ENCODE measurements at regions of chr6 and their contacts with region 1.

Region 1: GRCh38 chr6:145814501-145815308 is at the start of gene FBXO30:
- DNase-seq: peak; percentile 95
- H3K4me3 ChIP-seq: peak within 1 kb of the TSS; percentile 56 to 95 (median 90)
- H3K27ac ChIP-seq: peak within 1 kb of the TSS; percentile 83
- H3K4me1 ChIP-seq: peaks cover 28% of the 10 kb centered on the region
- H3K27me3 ChIP-seq: no peaks in the 10 kb centered on the region
- CTCF ChIP-seq: no peak
- POLR2A ChIP-seq: peak; percentile 71
- total RNA-seq, gene FBXO30: 10.4 and 11.1 TPM in 2 replicates

Region 2: DNA sequence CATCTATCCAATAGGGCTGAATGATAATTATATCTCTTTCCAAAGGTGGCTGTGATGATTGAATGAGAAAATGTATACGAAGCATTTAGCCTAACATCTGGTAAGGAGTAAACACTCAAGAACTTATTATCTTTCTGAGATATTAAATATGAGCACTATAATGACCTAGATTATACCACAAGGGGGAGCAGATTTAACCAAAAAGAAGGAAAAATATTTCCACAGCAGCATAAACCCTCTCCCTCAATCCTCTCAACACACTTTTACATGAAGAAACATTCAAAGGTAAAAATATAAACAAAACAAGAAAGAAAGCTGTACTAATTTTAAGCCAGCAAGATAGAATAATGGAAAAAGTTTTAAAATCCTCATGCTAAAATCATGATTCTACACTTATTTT is 81.1 kb after region 1 on chr6:
- CTCF ChIA-PET with region 1: interaction called, 4 read pairs
- POLR2A ChIA-PET with region 1: no interaction called
- dilution Hi-C with region 1: no loop called
- intact Hi-C with region 1: loop called (anchors 2 kb)
- DNase-seq: peak; percentile 35
- H3K4me3 ChIP-seq: no peak overlapping the region
- H3K27ac ChIP-seq: no peak overlapping the region
- H3K4me1 ChIP-seq: peaks cover 9% of the 10 kb centered on the region
- H3K27me3 ChIP-seq: no peaks in the 10 kb centered on the region
- CTCF ChIP-seq: peak; percentile 11 to 15
- POLR2A ChIP-seq: no peak

Measured in endothelial cell of umbilical vein (primary cell).